MCF 10A (cell line): ENCODE measurements at regions of chrX and their contacts with region 1.

Region 1: GRCh38 chrX:130393451-130394074 is 8.1 kb upstream of the GPR119 start:
- DNase-seq: peak; percentile 63
- H3K4me3 Mint-ChIP-seq: no peak overlapping the region
- H3K27ac Mint-ChIP-seq: no peak overlapping the region
- H3K4me1 Mint-ChIP-seq: no peaks in the 10 kb centered on the region
- H3K27me3 Mint-ChIP-seq: peaks cover 45% of the 10 kb centered on the region
- CTCF ChIP-seq: peak; percentile 82

Region 2: GRCh38 chrX:130120746-130121504 is 272.6 kb before region 1 on chrX:
- CTCF ChIA-PET with region 1: no interaction called
- POLR2A ChIA-PET with region 1: no interaction called
- intact Hi-C with region 1: no loop called
- DNase-seq: peak; percentile 77
- H3K4me3 Mint-ChIP-seq: peak overlapping the region; percentile 61
- H3K27ac Mint-ChIP-seq: peak overlapping the region; percentile 51
- H3K4me1 Mint-ChIP-seq: peaks cover 25% of the 10 kb centered on the region
- H3K27me3 Mint-ChIP-seq: peaks cover 12% of the 10 kb centered on the region
- CTCF ChIP-seq: peak; percentile 37

Region 3: DNA sequence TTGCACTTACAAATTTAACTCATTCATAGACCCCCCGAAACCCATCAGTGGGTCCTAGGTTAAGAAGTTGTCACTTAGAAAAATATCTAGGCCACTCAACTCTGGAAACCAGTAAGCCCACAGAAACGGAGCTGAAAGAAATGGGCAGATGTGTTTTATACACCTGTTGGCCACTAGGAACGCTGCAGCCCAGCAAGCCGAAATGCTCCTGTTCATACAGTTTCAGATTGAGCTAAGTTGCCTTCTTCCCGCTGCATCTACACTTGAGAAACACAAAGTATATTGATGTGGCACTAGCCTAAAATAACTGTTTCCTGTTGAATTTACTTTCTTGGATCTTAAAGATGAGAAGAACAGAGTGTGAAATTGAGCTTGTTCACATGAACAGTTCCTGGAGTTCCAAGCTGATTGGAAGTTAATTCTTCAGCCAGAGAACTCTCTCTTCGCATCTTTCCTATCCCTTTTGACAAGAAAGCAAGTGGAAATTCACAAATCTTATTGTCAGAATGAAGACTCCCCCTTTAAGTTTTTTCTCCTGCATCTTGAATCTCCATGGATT is 182.3 kb after region 1 on chrX:
- CTCF ChIA-PET with region 1: interaction called, 11 read pairs
- POLR2A ChIA-PET with region 1: no interaction called
- intact Hi-C with region 1: no loop called
- DNase-seq: peak; percentile 58
- H3K4me3 Mint-ChIP-seq: no peak overlapping the region
- H3K27ac Mint-ChIP-seq: no peak overlapping the region
- H3K4me1 Mint-ChIP-seq: no peaks in the 10 kb centered on the region
- H3K27me3 Mint-ChIP-seq: peaks cover 42% of the 10 kb centered on the region
- CTCF ChIP-seq: peak; percentile 72

Region 4: DNA sequence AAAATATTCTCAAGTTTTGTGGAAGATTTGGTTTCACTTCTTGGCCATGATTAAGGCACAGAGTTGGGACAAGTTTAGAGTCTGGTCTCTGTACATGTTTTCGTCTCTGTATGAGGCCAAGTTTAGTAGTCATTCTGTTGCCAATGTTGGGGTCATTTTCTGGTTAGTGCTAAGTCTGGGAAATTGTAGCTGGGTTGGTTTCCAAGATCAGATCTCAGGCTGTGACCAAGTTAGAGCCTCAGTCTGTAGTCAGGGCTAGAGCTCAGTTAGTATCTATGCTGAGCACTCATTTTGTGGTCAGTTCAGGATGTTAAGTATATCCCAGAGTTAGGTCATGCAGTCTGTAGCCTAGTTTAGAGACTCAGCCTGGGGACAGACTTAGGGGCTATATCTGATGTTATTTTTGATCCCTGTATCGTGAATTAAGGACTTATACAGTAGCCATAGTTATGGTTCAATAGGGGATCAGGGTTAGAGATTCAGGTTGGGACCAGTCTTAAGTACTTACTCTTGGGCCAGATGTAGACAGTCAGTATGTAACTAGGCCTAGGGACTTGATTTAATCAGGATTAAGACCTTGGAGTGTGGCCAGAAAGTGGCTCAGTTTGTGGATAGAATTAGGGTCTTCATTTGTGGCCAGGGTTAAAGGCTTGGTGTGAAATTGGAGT is 516.0 kb after region 1 on chrX:
- CTCF ChIA-PET with region 1: interaction called, 126 read pairs
- POLR2A ChIA-PET with region 1: no interaction called
- intact Hi-C with region 1: no loop called
- DNase-seq: no peak
- H3K4me3 Mint-ChIP-seq: no peak overlapping the region
- H3K27ac Mint-ChIP-seq: no peak overlapping the region
- H3K4me1 Mint-ChIP-seq: no peaks in the 10 kb centered on the region
- H3K27me3 Mint-ChIP-seq: peaks cover 14% of the 10 kb centered on the region
- CTCF ChIP-seq: no peak